ENCODE measurements at regions of chr9 and their contacts with region 1.

Region 1: GRCh38 chr9:70602321-70603019 is 188.0 kb upstream of the KLF9 start:
- DNase-seq: peak; percentile 41 to 74 (median 53)
- H3K4me3 ChIP-seq: no peak overlapping the region
- H3K27ac ChIP-seq: peak overlapping the region; percentile 74 to 85
- H3K4me1 ChIP-seq: peaks cover 11% of the 10 kb centered on the region
- H3K27me3 ChIP-seq: no peaks in the 10 kb centered on the region
- CTCF ChIP-seq: peak; percentile 61 to 92 (median 78)
- EP300 ChIP-seq: no peak
- POLR2A ChIP-seq: no peak

Region 2: DNA sequence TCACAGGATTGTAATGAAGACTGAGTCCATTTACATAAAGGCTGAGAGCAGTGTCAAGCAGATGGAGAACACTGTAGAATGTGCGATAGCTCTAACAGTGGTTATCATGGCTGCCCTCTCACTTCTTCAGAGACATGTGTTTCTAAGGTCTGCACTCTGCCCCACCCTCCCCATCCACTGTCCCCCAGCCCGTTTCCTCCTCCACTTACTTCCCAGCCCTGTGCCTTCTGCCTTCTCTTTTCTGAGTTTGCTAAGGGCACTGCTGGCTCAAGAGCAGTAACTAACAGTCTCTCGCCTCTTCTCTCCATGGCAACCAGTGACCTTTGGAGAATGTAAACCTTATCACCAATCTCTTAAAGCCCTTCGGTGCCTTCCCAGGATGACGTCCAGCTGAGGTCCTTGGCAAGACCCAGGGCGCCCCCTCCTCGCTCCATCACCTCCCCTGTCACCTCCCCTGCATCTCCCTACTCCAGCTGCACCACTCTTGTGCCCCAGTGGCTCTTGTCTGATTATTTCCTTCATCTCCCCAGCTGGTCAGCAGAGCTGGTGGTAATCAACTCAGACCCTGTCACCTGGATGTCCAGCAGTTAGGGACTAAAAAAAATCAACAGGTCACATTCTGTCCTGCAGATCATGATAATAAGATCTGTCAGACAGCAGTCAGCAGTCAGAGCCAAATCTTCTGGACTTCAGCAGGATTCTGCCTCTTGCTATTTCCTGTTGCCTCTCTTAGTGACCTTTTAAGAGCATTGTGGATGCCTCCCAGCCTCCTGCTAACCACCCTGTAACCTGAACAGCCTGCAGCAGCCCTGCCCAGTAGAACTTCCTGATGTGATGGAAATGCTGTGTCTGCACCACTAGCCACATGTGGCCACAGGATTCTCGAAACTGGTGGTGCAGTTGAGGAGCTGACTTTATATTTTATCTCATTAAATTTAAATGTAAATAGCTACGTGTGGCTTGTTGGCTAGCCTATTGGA is 1557.9 kb before region 1 on chr9:
- intact Hi-C with region 1: loop called in 1 of 4 experiments (anchors 10 kb)
- DNase-seq: no peak
- H3K4me3 ChIP-seq: no peak overlapping the region
- H3K27ac ChIP-seq: no peak overlapping the region
- H3K4me1 ChIP-seq: peaks cover 5% of the 10 kb centered on the region
- H3K27me3 ChIP-seq: no peaks in the 10 kb centered on the region
- CTCF ChIP-seq: no peak
- EP300 ChIP-seq: no peak
- POLR2A ChIP-seq: no peak

Region 3: GRCh38 chr9:70340572-70340971 is 261.9 kb before region 1 on chr9:
- intact Hi-C with region 1: loop called in 2 of 4 experiments (anchors 5 to 10 kb)
- DNase-seq: no peak
- H3K4me3 ChIP-seq: no peak overlapping the region
- H3K27ac ChIP-seq: no peak overlapping the region
- H3K4me1 ChIP-seq: no peaks in the 10 kb centered on the region
- H3K27me3 ChIP-seq: no peaks in the 10 kb centered on the region
- CTCF ChIP-seq: peak in 2 of 3 donors; percentile 22 to 37
- EP300 ChIP-seq: no peak
- POLR2A ChIP-seq: no peak

Region 4: GRCh38 chr9:70413798-70414775 is 188.4 kb before region 1 on chr9 and contains the start of gene KLF9:
- intact Hi-C with region 1: loop called in 2 of 4 experiments (anchors 1 to 2 kb)
- DNase-seq: peak; percentile 93 to 98 (median 94)
- H3K4me3 ChIP-seq: peak within 1 kb of the TSS; percentile 97
- H3K27ac ChIP-seq: peak within 1 kb of the TSS; percentile 98 to 100
- H3K4me1 ChIP-seq: peaks cover 7% of the 10 kb centered on the region
- H3K27me3 ChIP-seq: no peaks in the 10 kb centered on the region
- CTCF ChIP-seq: no peak
- EP300 ChIP-seq: peak; percentile 80
- POLR2A ChIP-seq: peak; percentile 92
- total RNA-seq, gene KLF9: 15.1 to 171 (median 91.0) TPM

Region 5: GRCh38 chr9:70484210-70485130 is 118.0 kb before region 1 on chr9:
- intact Hi-C with region 1: loop called in 2 of 4 experiments (anchors 2 kb)
- DNase-seq: peak in 1 of 5 donors; percentile 52
- H3K4me3 ChIP-seq: no peak overlapping the region
- H3K27ac ChIP-seq: no peak overlapping the region
- H3K4me1 ChIP-seq: peaks cover 14% of the 10 kb centered on the region
- H3K27me3 ChIP-seq: no peaks in the 10 kb centered on the region
- CTCF ChIP-seq: peak; percentile 17 to 85 (median 72)
- EP300 ChIP-seq: no peak
- POLR2A ChIP-seq: no peak

Region 6: DNA sequence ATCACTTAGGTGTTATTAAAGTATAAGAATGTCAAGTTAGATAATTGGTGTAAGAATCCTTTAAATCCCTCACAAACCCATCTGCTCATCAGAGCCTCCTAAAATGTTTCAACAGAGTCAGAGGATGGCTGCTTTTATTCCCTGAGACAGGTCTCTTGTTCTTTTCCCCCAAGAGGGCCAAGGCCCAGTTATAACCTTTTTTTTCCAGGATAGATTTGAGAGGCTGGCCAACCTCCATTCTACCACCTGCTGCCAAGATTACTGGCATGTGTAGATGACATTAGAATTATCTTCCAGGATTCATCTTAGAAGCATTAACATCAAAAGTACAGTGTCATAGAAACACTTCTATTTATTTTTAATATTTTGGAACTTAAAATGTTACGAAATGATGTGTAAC is 213.8 kb after region 1 on chr9:
- intact Hi-C with region 1: no loop called
- DNase-seq: no peak
- H3K4me3 ChIP-seq: no peak overlapping the region
- H3K27ac ChIP-seq: no peak overlapping the region
- H3K4me1 ChIP-seq: no peaks in the 10 kb centered on the region
- H3K27me3 ChIP-seq: no peaks in the 10 kb centered on the region
- CTCF ChIP-seq: no peak
- EP300 ChIP-seq: no peak
- POLR2A ChIP-seq: no peak

Measured in ovary (tissue), 10 donors.